ENCODE measurements at regions of chr1 and their contacts with region 1.

Region 1: GRCh38 chr1:201023517-201023902 is at the start of gene KIF21B:
- DNase-seq: peak in 1 of 2 experiments; percentile 92
- H3K4me3 ChIP-seq: peak within 1 kb of the TSS; percentile 64 to 84 (median 67)
- H3K27ac ChIP-seq: no peak within 1 kb of the TSS
- H3K4me1 ChIP-seq: peaks cover 22 to 49% (median 37%) of the 10 kb centered on the region in 4 experiments
- H3K27me3 ChIP-seq: peaks cover 0 to 5% (median under 1%) of the 10 kb centered on the region in 4 experiments; a peak in 2 of 7 replicates
- CTCF ChIP-seq: no peak
- EP300 ChIP-seq: no peak
- POLR2A ChIP-seq: no peak
- RAD21 ChIP-seq: no peak
- total RNA-seq, gene KIF21B: 26.5 and 27.2 TPM in 2 replicates

Region 2: GRCh38 chr1:200890818-200891773 is 132.4 kb before region 1 on chr1:
- CTCF ChIA-PET with region 1: interaction called, 5 read pairs
- POLR2A ChIA-PET with region 1: interaction called, 41 read pairs
- DNase-seq: peak in 1 of 2 experiments; percentile 86
- H3K4me3 ChIP-seq: peak overlapping the region; percentile 67 to 90 (median 75)
- H3K27ac ChIP-seq: peak overlapping the region; percentile 99
- H3K4me1 ChIP-seq: peaks cover 15 to 49% (median 34%) of the 10 kb centered on the region in 4 experiments
- H3K27me3 ChIP-seq: no peaks in the 10 kb centered on the region
- CTCF ChIP-seq: peak; percentile 48 to 77 (median 73)
- EP300 ChIP-seq: peak in 1 of 2 experiments; percentile 96; a peak in 2 of 3 replicates
- POLR2A ChIP-seq: peak; percentile 58 to 82; a peak in 2 of 3 replicates
- RAD21 ChIP-seq: peak; percentile 42 to 53

Region 3: DNA sequence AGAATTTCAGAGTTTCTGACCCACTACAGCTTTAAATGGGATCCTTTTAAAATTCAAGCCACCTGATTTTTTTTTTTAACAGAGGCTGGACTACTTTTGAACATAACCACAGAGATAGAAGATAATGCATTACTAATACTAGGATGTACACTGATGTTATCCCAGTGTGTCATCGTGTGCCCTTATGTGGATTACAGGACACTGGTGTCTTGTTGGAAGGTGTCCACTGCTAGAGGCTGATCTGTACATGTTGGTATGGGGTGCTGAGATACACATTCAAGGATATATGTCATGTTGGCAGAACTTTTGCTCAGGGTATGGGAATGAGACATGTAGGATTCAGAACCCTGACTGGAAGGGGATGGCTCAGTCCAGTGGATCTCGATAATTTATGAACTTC is 72.5 kb before region 1 on chr1:
- CTCF ChIA-PET with region 1: no interaction called
- POLR2A ChIA-PET with region 1: no interaction called
- DNase-seq: no peak
- H3K4me3 ChIP-seq: no peak overlapping the region
- H3K27ac ChIP-seq: no peak overlapping the region
- H3K4me1 ChIP-seq: no peaks in the 10 kb centered on the region
- H3K27me3 ChIP-seq: no peaks in the 10 kb centered on the region
- CTCF ChIP-seq: no peak
- EP300 ChIP-seq: no peak
- POLR2A ChIP-seq: no peak
- RAD21 ChIP-seq: no peak

Region 4: DNA sequence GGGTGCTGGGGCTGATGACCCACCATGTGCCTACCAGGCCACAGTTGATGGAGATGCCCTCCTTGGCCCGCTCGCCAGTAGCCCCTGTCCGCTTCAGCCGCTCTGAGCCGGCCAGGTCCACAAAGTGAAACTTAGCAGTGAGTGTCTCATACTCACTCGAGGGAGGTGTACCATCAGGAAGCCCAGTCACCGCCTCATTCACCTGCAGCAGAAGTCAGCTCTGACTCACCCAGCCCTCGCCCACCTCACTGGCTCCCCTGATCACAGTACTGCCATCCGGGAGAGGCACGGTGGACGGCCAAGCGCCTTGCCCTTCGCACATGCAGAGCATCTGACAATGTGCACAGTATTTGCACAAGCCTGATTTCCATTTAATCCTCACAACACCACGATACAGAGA is 18.8 kb before region 1 on chr1:
- CTCF ChIA-PET with region 1: interaction called, 532 read pairs
- POLR2A ChIA-PET with region 1: interaction called, 8 read pairs
- DNase-seq: no peak
- H3K4me3 ChIP-seq: no peak overlapping the region
- H3K27ac ChIP-seq: no peak overlapping the region
- H3K4me1 ChIP-seq: peaks cover 0 to 1% (median under 1%) of the 10 kb centered on the region in 4 experiments; a peak in 2 of 7 replicates
- H3K27me3 ChIP-seq: no peaks in the 10 kb centered on the region
- CTCF ChIP-seq: no peak
- EP300 ChIP-seq: no peak
- POLR2A ChIP-seq: no peak
- RAD21 ChIP-seq: no peak

Region 5: GRCh38 chr1:201042779-201043461 is 19.4 kb after region 1 on chr1:
- CTCF ChIA-PET with region 1: interaction called, 274 read pairs
- POLR2A ChIA-PET with region 1: interaction called, 20 read pairs
- DNase-seq: peak in 1 of 2 experiments; percentile 72
- H3K4me3 ChIP-seq: no peak overlapping the region
- H3K27ac ChIP-seq: no peak overlapping the region
- H3K4me1 ChIP-seq: no peaks in the 10 kb centered on the region
- H3K27me3 ChIP-seq: no peaks in the 10 kb centered on the region
- CTCF ChIP-seq: peak; percentile 88 to 98 (median 90)
- EP300 ChIP-seq: no peak
- POLR2A ChIP-seq: no peak
- RAD21 ChIP-seq: peak; percentile 94 to 95

Region 6: GRCh38 chr1:201085916-201086735 is 62.6 kb after region 1 on chr1:
- CTCF ChIA-PET with region 1: interaction called, 21 read pairs
- POLR2A ChIA-PET with region 1: no interaction called
- DNase-seq: peak; percentile 25 to 81
- H3K4me3 ChIP-seq: no peak overlapping the region
- H3K27ac ChIP-seq: no peak overlapping the region
- H3K4me1 ChIP-seq: no peaks in the 10 kb centered on the region
- H3K27me3 ChIP-seq: no peaks in the 10 kb centered on the region
- CTCF ChIP-seq: peak; percentile 71 to 97 (median 86)
- EP300 ChIP-seq: no peak
- POLR2A ChIP-seq: no peak
- RAD21 ChIP-seq: peak; percentile 88 to 94